Heart right ventricle (tissue), 16 donors: ENCODE measurements at regions of chr1 and their contacts with region 1.

Region 1: DNA sequence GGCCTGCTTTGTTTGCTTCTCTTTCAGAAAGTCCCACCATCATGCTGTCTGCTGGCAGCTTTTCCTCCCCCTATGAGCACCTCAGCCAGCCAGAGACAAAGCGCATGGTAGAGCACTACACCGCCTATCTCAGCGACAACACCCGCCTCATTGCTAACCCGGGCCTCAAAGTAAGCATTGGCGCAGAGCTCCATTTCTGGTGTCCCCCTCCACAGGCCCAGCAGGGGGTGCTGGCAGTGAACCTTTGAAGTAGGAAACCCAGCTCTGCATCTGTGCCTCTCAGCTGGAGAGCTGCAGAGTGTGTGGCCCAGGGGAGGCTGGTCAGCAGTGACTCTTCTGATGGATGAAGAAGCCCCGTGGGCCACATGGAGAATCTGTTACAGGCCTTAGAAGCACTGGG is 81.2 kb upstream of the RAVER2 start:
- DNase-seq: no peak
- ATAC-seq: peak in 1 of 8 donors; percentile 15
- H3K4me3 ChIP-seq: no peak overlapping the region
- H3K27ac ChIP-seq: no peak overlapping the region
- H3K4me1 ChIP-seq: peaks cover 0 to 6% (median 0%) of the 10 kb centered on the region in 9 donors
- H3K27me3 ChIP-seq: no peaks in the 10 kb centered on the region
- CTCF ChIP-seq: peak in 4 of 9 donors; percentile 11 to 20 (median 14)

Region 2: DNA sequence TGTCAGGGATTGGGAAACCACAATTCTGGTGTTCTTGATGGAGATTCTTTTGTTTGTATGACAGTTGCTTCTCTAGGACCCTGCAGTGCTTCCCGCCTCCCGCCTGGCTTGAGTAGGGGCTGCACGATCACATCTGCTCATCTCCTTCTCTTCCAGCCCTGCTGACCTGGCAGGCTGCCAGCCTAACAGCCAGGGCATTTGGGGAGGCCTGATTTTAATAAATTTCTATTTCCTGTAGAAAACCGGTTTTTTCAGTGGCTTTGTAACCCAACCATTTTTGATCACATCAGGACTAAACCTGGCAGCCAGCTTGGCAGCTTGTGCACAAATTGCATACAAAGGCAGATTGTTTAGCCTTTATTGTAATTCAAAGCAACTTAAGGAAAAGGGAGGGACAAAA is 381.3 kb before region 1 on chr1:
- intact Hi-C with region 1: loop called in 1 of 10 experiments (anchors 10 kb)
- DNase-seq: peak in 1 of 2 donors; percentile 16
- ATAC-seq: no peak
- H3K4me3 ChIP-seq: no peak overlapping the region
- H3K27ac ChIP-seq: no peak overlapping the region
- H3K4me1 ChIP-seq: peaks cover 0 to 7% (median 0%) of the 10 kb centered on the region in 9 donors
- H3K27me3 ChIP-seq: peaks cover 0 to 6% (median 0%) of the 10 kb centered on the region in 7 donors
- CTCF ChIP-seq: no peak

Region 3: GRCh38 chr1:64553281-64553680 is 110.4 kb before region 1 on chr1:
- intact Hi-C with region 1: no loop called
- DNase-seq: no peak
- ATAC-seq: no peak
- H3K4me3 ChIP-seq: no peak overlapping the region
- H3K27ac ChIP-seq: no peak overlapping the region
- H3K4me1 ChIP-seq: peaks cover 0 to 24% (median 6%) of the 10 kb centered on the region in 9 donors
- H3K27me3 ChIP-seq: no peaks in the 10 kb centered on the region
- CTCF ChIP-seq: peak in 4 of 9 donors; percentile 28 to 38 (median 30)

Region 4: DNA sequence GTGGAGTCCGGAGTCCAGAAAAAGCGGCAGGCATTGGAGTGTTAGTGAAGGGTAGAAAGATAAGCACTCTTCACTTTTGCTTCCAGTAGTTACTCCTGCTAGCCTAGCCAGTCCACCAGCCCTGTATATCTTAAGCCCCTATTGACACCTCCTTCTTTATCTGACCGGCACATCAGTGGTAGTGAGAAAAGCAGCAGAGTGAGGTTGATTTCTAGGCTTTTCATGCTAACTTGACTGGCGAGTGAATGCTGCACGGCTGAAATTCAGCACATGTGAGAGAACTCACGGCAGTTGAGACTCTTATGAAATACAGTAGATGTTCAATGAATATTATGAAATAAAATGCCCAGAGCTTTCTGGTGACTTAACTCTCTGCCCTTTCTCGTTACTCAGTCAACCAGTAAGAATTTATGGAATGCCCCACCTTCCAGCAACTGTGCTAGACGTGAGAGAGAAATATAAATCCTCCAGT is 65.5 kb before region 1 on chr1:
- intact Hi-C with region 1: loop called in 1 of 10 experiments (anchors 2 kb)
- DNase-seq: no peak
- ATAC-seq: peak in 1 of 8 donors; percentile 55
- H3K4me3 ChIP-seq: no peak overlapping the region
- H3K27ac ChIP-seq: no peak overlapping the region
- H3K4me1 ChIP-seq: peaks cover 0 to 22% (median 9%) of the 10 kb centered on the region in 9 donors
- H3K27me3 ChIP-seq: no peaks in the 10 kb centered on the region
- CTCF ChIP-seq: no peak